ENCODE measurements at regions of chr14 and their contacts with region 1.

Region 1: DNA sequence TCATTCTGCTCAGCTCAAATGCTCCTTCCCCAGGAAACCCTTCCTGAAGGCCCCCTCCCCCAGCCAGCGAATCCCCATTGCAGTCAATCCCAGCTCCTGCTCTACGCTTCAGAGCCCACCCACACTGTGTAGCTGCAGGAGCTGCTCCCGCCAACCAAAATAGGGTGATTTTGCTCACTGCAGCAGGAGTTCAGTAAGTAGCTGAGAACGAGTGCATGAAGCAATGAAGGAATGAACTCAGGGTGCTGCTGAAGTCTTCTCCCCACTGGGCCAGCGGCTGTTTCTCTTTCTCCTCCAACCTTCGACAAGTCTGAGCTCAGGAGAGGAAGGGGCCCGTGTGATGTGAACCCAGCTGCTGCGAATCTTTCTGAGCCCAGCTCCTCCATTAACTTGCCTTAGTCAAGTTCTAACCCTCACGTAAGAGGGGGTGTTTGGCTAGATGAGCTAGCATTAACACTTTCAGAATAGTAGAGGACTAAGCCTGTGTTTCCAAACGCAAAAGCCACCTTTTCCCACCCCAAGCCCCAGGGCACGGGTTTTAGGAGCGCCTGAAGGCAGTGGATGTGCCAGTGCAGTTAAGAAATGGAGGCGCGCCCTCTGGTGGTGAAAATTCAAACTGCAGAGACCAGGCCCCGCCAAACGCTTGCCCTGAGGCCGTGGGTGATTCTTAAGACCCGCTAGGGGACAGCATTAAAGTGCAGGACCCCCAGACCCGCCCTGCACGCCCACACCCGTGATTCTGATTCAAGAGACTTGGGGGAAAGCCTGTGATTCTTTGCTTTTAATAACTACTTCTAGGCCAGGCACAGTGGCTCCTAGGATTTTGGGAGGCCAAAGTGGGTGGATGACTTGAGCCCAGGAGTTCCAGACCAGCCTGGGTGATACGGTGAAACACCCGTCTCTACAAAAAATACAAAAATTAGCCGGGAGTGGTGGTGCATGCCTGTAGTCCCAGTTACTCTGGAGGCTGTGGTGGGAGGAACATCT is 11.9 kb upstream of the SERPINA4 start:
- DNase-seq: peak; percentile 41 to 95 (median 76)

Region 2: GRCh38 chr14:94423453-94424056 is 125.7 kb before region 1 on chr14:
- intact Hi-C with region 1: loop called (anchors 5 kb)
- DNase-seq: peak; percentile 18 to 95 (median 74)

Region 3: GRCh38 chr14:94738751-94739150 is 189.5 kb after region 1 on chr14:
- intact Hi-C with region 1: no loop called
- DNase-seq: peak in 1 of 10 donors; percentile 12